ENCODE measurements at regions of chr5 and their contacts with region 1.

Region 1: GRCh38 chr5:139593716-139594319 is 32.7 kb downstream of the UBE2D2 start:
- DNase-seq: no peak
- ATAC-seq: no peak

Region 2: DNA sequence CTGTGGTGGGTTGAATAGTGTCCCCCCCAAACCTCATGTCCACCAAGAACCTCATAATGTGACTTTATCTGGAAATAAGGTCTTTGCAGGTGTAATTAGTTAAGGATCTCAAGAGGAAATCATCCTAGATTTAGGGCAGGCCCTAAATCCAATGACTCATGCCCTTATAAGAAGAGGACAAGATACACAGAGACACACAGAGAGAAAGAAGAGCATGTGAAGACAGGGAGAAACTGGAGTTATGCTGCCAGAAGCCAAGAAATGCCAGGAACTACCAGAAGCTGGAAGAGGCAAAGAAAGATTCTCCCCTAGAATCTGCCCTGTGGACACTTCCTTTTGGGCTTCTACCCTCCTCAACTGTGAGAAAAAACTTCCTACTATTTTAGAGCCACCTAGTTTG is 1569.7 kb before region 1 on chr5:
- intact Hi-C with region 1: no loop called
- DNase-seq: no peak
- ATAC-seq: no peak

Region 3: GRCh38 chr5:139557811-139558210 is 36.0 kb before region 1 on chr5:
- intact Hi-C with region 1: loop called (anchors 2 kb)
- DNase-seq: no peak
- ATAC-seq: no peak

Measured in sciatic nerve (tissue), 2 donors.